ENCODE measurements at regions of chr18 and their contacts with region 1.

Region 1: DNA sequence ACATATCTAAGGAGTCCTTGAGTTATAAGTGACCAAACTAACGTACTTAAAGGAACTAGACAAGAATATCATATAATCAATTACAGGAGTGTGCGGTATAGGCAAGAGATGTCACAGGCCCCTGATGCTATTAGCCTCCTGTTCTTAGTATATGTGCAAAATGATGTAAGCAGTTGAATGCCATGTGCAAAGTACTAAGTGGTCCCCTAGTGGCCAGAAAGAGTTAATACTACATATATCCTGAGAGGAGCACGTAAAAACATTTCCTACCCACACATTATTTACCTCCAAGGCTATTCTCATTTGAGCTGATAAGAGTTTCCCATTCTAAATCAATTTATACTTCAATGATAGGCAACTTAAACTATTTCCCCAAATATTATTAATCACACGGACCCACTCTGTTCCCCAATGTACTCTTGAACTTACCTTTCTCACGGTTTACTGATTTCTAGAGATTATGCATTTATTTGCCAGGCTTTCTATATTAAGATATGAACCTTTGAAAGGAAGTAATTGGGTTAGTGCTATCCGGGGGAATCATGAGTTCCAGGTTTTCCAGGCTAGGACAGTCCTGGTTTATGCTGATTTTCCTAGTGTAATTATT is 158.0 kb upstream of the KLHL14 start:
- DNase-seq: no peak
- H3K4me3 ChIP-seq: no peak overlapping the region
- H3K4me3 Mint-ChIP-seq: no peak overlapping the region
- H3K27ac ChIP-seq: no peak overlapping the region
- H3K27ac Mint-ChIP-seq: no peak overlapping the region
- H3K4me1 ChIP-seq: no peaks in the 10 kb centered on the region
- H3K4me1 Mint-ChIP-seq: no peaks in the 10 kb centered on the region
- H3K27me3 ChIP-seq: no peaks in the 10 kb centered on the region
- H3K27me3 Mint-ChIP-seq: no peaks in the 10 kb centered on the region

Region 2: GRCh38 chr18:32879497-32879896 is 51.3 kb before region 1 on chr18:
- CTCF ChIA-PET with region 1: no interaction called
- POLR2A ChIA-PET with region 1: no interaction called
- intact Hi-C with region 1: loop called (anchors 10 kb)
- DNase-seq: no peak
- H3K4me3 ChIP-seq: no peak overlapping the region
- H3K4me3 Mint-ChIP-seq: no peak overlapping the region
- H3K27ac ChIP-seq: no peak overlapping the region
- H3K27ac Mint-ChIP-seq: no peak overlapping the region
- H3K4me1 ChIP-seq: no peaks in the 10 kb centered on the region
- H3K4me1 Mint-ChIP-seq: no peaks in the 10 kb centered on the region
- H3K27me3 ChIP-seq: no peaks in the 10 kb centered on the region
- H3K27me3 Mint-ChIP-seq: no peaks in the 10 kb centered on the region

Region 3: GRCh38 chr18:32956591-32957315 is 26.0 kb after region 1 on chr18:
- CTCF ChIA-PET with region 1: no interaction called
- POLR2A ChIA-PET with region 1: no interaction called
- intact Hi-C with region 1: no loop called
- DNase-seq: no peak
- H3K4me3 ChIP-seq: no peak overlapping the region
- H3K4me3 Mint-ChIP-seq: no peak overlapping the region
- H3K27ac ChIP-seq: no peak overlapping the region
- H3K27ac Mint-ChIP-seq: no peak overlapping the region
- H3K4me1 ChIP-seq: no peaks in the 10 kb centered on the region
- H3K4me1 Mint-ChIP-seq: no peaks in the 10 kb centered on the region
- H3K27me3 ChIP-seq: no peaks in the 10 kb centered on the region
- H3K27me3 Mint-ChIP-seq: no peaks in the 10 kb centered on the region

Measured in CD4-positive, alpha-beta memory T cell (primary cell).